ENCODE measurements at regions of chr3 and their contacts with region 1.

Region 1: GRCh38 chr3:109731620-109732473 is 394.5 kb upstream of the DPPA4 start:
- DNase-seq: no peak
- ATAC-seq: peak; percentile 75

Region 2: GRCh38 chr3:110070161-110070916 is 338.5 kb after region 1 on chr3:
- intact Hi-C with region 1: no loop called
- DNase-seq: no peak
- ATAC-seq: peak; percentile 96

Region 3: DNA sequence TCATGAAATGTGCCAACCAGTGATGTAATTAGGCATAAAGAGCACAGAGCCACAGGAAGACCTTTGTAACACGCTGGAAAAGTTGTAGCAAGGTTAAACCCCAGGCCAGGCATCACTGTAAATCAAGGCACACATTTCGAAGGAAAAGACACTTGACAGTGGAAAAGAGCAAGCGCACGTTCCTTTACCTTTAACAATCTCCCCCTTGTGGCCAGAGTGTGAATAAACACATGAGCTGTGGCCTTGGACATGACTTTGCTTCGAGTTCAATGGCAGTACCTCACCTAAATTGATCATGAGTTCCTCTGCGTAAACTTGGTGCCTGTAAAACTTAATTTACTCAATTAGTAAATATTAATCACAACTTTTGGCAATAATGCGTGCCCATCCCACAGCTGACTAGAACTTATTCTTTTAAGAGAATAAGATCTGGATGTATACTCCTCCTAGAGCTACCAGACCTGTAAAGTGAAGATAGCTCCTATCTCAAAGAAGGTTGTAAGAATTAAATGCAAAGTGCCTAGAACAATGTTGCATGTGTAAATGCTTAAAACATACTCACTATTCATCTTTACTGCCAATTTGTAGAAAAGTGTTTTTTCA is 582.8 kb after region 1 on chr3:
- intact Hi-C with region 1: loop called (anchors 5 kb)
- DNase-seq: peak; percentile 36
- ATAC-seq: peak; percentile 76